ENCODE measurements at regions of chr5 and their contacts with region 1.

Region 1: GRCh38 chr5:81851481-81852178 is 100.7 kb upstream of the SSBP2 start:
- DNase-seq: peak; percentile 97
- ATAC-seq: peak; percentile 97

Region 2: DNA sequence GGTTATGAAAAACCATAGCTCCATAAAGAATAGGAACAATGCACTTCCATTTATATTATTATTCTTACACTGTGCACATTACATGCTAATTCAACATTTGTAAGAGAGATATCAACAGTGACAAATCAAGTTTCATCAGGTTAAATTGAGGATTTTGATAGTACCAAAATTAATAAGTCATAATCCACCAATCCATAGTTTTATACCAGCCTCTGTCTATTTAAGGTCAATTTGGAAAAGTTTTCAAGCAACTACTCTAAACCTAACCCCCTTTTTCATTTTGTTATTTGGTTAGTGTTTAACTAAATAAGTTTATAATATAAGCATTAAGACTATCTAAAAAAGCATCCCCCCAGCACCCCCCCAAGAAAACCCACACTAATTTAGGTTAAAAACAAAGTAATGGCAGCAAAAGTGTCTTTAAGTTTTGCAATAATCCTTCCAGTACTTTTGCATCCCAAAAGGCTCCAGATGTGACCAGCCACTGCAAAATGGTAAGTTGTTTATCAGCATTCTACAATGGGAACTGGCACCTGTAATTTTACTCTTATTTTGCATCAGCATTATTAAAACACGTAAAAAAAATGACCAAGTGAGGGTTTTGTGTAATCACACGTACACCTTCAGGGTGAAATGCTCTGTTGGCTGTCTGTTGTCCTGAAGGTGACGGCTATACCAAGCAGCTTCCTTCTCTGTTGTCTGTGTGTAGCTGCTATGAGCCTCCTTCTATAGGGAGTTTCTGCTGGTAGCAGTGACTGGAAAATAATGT is 64.0 kb before region 1 on chr5:
- intact Hi-C with region 1: loop called (anchors 5 kb)
- DNase-seq: peak; percentile 82
- ATAC-seq: peak; percentile 82